ENCODE measurements at regions of chr16 and their contacts with region 1.

Region 1: DNA sequence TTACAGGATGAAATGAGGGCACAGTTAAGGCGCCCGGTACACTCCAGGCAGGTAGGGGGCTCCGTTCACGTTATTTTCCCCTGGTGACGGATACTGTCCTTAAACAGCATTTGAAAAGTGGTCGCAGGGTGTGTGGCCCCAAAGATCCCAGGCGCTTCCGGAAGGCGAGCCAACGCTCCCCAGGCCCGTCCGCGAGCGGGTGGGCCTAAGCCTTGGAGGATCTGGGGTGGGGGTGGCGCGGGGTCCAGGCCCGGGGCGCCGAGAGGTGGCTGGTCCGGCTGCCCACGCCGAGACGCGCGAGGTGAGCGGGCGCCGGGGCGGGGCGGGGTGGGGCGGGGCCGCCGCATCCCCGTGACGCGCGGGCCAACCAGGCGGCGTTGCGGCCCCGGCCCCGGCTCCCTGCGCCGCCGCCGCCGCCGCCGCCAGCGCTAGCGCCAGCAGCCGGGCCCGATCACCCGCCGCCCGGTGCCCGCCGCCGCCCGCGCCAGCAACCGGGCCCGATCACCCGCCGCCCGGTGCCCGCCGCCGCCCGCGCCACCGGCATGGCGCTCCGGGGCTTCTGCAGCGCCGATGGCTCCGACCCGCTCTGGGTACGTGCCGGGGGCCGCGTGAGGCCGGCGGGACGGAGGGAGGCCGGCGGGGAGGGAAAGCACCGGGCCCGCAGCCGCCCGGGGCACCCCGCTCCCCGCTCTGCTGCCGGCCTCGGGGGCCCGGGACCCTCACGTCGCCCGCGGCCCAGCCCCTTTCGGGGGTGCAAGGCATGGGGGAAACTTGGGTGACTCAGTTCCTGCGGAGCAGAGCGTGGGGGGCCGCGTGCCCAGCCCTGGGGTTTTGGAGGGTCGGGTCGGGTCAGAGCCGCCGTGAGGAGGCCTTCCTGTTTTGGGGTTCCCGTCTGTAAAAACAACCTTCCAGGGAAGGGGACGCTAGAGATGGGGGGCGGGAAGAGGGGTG is at the start of gene ABCC1:
- DNase-seq: peak; percentile 33 to 75 (median 51)
- ATAC-seq: peak in 3 of 4 donors; percentile 68 to 86 (median 84)
- H3K4me3 ChIP-seq: peak within 1 kb of the TSS; percentile 67 to 98 (median 86)
- H3K27ac ChIP-seq: peak within 1 kb of the TSS; percentile 15 to 87 (median 79)
- H3K4me1 ChIP-seq: peaks cover 0 to 47% (median 21%) of the 10 kb centered on the region in 12 donors
- H3K27me3 ChIP-seq: no peaks in the 10 kb centered on the region
- CTCF ChIP-seq: peak in 3 of 12 donors; percentile 8 to 22 (median 13)
- POLR2A ChIP-seq: no peak
- total RNA-seq, gene ABCC1: 14.4 to 28.0 (median 24.0) TPM

Region 2: GRCh38 chr16:15899538-15900100 is 49.9 kb before region 1 on chr16:
- intact Hi-C with region 1: loop called in 2 of 10 experiments (anchors 5 to 10 kb)
- DNase-seq: no peak
- ATAC-seq: no peak
- H3K4me3 ChIP-seq: no peak overlapping the region
- H3K27ac ChIP-seq: no peak overlapping the region
- H3K4me1 ChIP-seq: peaks cover 0 to 6% (median 0%) of the 10 kb centered on the region in 12 donors
- H3K27me3 ChIP-seq: no peaks in the 10 kb centered on the region
- CTCF ChIP-seq: no peak
- POLR2A ChIP-seq: no peak

Region 3: DNA sequence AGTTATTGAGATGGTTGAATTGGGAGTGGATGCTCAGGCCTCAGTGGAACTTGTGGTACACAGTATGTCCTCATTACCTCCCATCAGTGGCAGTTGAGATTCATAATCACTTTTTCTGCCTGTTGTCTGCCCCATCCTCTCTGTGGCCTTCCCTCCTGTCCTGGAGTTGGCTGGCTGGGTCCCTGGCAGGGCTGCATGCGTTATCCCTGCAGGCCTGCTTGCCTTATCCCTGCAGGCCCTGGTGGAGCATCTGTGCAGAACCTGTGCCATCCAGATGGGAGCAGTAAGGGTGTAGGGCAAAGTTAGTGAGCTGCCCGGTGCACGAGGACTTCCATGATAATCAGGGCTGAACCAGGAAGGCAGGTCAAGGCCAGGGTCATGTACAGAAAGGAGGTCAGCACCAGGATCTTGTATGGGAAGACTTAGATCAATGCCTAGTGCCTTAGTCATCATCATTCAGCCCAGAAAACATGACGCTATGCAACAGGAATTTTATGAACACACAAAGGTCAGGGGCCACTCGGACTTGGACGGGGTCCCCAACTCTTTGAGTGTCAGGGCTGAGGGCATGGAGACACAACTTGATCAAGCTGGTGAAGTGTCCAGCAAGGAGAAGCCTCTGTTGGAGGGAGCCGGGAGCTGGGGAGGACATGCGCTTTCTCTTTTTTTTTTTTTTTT is 47.1 kb after region 1 on chr16:
- intact Hi-C with region 1: no loop called
- DNase-seq: peak in 2 of 5 donors; percentile 11 to 65
- ATAC-seq: peak in 3 of 4 donors; percentile 34 to 49 (median 36)
- H3K4me3 ChIP-seq: no peak overlapping the region
- H3K27ac ChIP-seq: peak overlapping the region in 4 of 12 donors; percentile 32 to 71 (median 56)
- H3K4me1 ChIP-seq: peaks cover 3 to 68% (median 47%) of the 10 kb centered on the region in 12 donors
- H3K27me3 ChIP-seq: no peaks in the 10 kb centered on the region
- CTCF ChIP-seq: no peak
- POLR2A ChIP-seq: no peak

Region 4: GRCh38 chr16:16014329-16015144 is 65.1 kb after region 1 on chr16:
- intact Hi-C with region 1: loop called in 2 of 10 experiments (anchors 5 kb)
- DNase-seq: peak; percentile 67 to 79 (median 71)
- ATAC-seq: peak; percentile 51 to 90 (median 70)
- H3K4me3 ChIP-seq: no peak overlapping the region
- H3K27ac ChIP-seq: peak overlapping the region in 1 of 12 donors; percentile 51
- H3K4me1 ChIP-seq: peaks cover 0 to 22% (median 13%) of the 10 kb centered on the region in 12 donors
- H3K27me3 ChIP-seq: no peaks in the 10 kb centered on the region
- CTCF ChIP-seq: no peak
- POLR2A ChIP-seq: no peak

Region 5: DNA sequence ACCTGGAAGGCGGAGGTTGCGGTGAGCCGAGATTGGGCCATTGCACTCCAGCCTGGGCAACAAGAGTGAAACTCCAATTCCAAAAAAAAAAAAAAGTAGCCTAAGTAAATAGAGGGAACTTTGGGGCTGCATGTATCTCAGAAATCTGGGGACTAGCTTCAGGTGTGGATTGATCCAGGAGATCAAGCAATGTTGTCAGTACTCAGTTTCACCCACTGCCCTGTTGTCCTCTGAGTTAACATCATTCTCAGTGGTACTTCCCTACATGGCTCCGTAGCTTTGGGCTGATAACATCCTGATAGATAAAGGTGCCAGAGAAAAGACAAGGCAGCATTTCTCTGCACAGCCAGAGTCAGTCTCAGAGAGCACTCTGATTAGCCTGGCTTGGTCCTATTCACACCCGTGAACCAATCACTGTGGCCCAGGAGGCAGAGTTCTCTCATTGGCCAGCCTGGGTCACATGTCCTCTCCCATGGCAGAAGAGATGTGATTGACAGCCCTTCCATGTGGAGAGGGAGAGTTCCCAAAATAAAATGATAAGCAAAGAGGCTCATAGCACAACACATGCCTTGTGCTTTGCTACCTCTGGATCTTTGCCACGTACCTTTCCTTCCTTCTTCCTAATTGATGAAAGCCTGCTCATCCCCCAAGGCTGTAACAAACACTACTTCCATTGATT is 99.6 kb after region 1 on chr16:
- intact Hi-C with region 1: loop called in 1 of 10 experiments (anchors 10 kb)
- DNase-seq: peak; percentile 54 to 73 (median 62)
- ATAC-seq: peak; percentile 93 to 95 (median 94)
- H3K4me3 ChIP-seq: no peak overlapping the region
- H3K27ac ChIP-seq: peak overlapping the region in 9 of 12 donors; percentile 1 to 62 (median 38)
- H3K4me1 ChIP-seq: peaks cover 0 to 17% (median 4%) of the 10 kb centered on the region in 12 donors
- H3K27me3 ChIP-seq: no peaks in the 10 kb centered on the region
- CTCF ChIP-seq: no peak
- POLR2A ChIP-seq: no peak

Region 6: GRCh38 chr16:16127469-16128116 is 178.1 kb after region 1 on chr16:
- intact Hi-C with region 1: loop called in 2 of 10 experiments (anchors 10 kb)
- DNase-seq: peak in 3 of 5 donors; percentile 50 to 60 (median 59)
- ATAC-seq: peak; percentile 64 to 88 (median 85)
- H3K4me3 ChIP-seq: no peak overlapping the region
- H3K27ac ChIP-seq: peak overlapping the region in 1 of 12 donors; percentile 71
- H3K4me1 ChIP-seq: no peaks in the 10 kb centered on the region
- H3K27me3 ChIP-seq: no peaks in the 10 kb centered on the region
- CTCF ChIP-seq: peak; percentile 82 to 93 (median 87)
- POLR2A ChIP-seq: no peak